ENCODE measurements at regions of chr10 and their contacts with region 1.

Region 1: DNA sequence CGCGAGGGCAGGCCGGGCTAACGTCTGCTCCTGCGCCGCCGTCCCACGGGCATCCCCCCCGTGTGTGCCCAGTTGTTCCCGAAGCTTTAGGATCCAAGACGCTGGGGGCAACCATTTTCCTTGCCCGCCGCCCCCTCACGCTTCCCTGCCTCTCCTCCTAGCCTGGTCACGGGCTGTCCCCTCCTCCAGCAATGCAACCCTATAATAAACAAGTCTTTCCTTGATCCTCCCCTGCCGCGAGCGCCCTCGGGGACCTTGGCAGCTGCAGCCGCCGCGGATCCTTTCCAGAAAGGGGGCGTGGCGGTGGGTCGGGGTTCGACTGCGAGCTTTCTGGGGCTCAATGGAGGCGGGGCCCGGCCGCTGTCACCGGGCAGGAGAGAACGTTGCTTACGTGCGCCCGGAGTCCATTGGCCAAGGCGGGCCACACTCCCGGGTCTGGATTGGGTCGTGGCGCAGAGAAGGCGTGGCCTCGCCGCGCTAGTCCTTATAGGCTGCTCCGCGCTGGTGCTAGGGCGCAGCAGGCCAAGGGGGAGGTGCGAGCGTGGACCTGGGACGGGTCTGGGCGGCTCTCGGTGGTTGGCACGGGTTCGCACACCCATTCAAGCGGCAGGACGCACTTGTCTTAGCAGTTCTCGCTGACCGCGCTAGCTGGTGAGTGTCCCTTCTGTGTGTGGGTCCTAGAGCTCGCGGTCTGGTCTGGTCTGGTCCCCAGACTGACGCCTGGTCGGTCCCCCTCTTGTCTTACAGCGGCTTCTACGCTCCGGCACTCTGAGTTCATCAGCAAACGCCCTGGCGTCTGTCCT is at the start of gene DDIT4:
- DNase-seq: peak; percentile 100
- ATAC-seq: peak; percentile 93
- total RNA-seq, gene DDIT4: 88.8 to 112 TPM

Region 2: DNA sequence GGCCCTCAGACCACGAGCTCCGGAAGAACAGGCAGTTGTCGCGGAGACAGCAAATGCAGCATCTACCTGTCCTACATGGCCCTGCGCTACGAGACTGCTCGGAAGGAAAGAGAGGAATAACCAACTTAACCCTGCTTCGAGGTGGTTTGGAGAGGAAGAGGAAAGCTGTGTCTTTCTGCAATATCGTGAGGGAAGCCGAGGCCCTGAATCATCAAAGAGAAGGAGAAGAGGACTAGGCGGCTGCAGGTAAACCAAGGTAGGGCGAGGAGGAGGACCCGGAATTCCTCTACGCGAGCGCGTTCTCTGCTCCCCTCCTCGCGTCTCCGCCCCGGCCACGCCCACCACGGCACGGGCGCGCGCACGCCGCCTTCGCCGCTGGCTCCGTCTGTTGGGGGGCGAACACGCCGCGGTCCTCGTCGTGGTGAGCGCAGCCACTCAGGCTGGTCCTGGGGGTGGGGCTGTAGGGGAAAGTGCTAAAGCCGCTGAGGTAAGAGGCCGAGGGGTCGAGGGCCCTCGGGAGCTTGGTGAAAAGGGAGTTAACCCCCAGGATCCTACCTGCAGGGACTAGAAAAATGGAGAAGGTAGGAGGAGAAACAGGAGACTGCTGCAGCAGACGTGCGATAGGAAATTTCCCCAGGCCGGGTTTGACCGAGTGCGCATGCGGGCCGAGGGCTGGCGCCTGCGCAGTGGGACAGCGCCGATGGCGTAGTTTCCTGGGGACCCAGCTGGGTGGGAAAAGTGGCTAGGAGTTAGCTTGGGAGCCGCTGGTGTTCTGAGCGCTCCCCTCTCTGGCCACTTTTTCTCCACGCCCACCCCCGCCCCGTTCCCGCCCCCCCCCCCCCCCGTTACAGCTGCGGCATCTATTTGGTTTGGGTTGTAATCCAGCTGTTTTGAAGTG is 57.7 kb before region 1 on chr10 and contains the starts of genes ANAPC16 and ASCC1:
- intact Hi-C with region 1: loop called in 1 of 2 experiments (anchors 5 kb)
- DNase-seq: peak; percentile 92
- ATAC-seq: peak; percentile 98 to 99
- total RNA-seq, gene ANAPC16: 155 to 168 TPM
- total RNA-seq, gene ASCC1: 25.2 to 28.1 TPM

Region 3: DNA sequence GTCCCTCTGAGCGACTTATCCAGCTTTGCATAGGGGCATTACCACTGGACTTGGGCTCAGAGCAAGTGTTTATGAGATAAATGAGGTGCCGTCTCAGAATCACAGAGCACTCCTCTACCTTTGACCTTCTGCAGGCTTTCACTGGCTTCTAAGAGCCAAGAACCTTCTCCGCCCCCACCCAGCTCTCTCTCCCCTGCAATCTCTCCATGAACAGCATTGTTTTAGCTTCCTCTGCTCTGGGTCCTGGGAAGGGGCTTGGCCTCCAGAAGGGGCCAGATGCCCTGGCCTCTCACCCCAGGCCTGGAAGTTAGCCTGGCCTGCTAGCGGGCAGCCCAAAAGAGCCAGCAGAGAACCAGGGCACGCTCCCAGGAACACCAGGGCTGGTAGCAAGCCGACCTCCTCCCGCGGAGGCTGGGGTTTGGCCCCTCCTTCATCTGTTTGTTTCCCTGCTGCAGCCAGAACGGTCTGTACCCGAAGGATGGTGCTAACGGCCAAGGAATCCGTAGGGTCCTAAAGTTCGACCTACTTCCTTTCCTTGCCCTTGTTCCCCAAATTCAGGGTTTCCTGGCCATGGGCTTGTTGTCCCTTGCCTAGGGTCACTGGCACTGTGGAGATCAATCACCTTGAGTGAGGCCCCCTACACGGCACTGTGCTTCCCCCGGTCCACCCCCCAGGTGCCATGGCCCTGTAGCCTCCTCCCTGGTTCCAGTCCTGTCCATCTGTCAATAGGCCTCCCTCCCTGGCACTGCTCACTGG is 18.6 kb before region 1 on chr10:
- intact Hi-C with region 1: loop called in 1 of 2 experiments (anchors 2 kb)
- DNase-seq: peak; percentile 92
- ATAC-seq: peak; percentile 93

Region 4: GRCh38 chr10:72319416-72320254 is 46.0 kb after region 1 on chr10:
- intact Hi-C with region 1: loop called (anchors 5 to 10 kb)
- DNase-seq: peak; percentile 95
- ATAC-seq: peak; percentile 84 to 88

Measured in left cardiac atrium (tissue), 4 donors.